ENCODE measurements at regions of chr4 and their contacts with region 1.

Region 1: GRCh38 chr4:162770761-162771490 is 395.8 kb downstream of the NAF1 start:
- DNase-seq: no peak
- ATAC-seq: no peak
- H3K4me3 ChIP-seq: no peak overlapping the region
- H3K27ac ChIP-seq: no peak overlapping the region
- H3K4me1 ChIP-seq: no peaks in the 10 kb centered on the region
- H3K27me3 ChIP-seq: no peaks in the 10 kb centered on the region
- CTCF ChIP-seq: no peak

Region 2: GRCh38 chr4:162610116-162610515 is 160.8 kb before region 1 on chr4:
- CTCF ChIA-PET with region 1: no interaction called
- POLR2A ChIA-PET with region 1: no interaction called
- intact Hi-C with region 1: no loop called
- DNase-seq: no peak
- ATAC-seq: no peak
- H3K4me3 ChIP-seq: no peak overlapping the region
- H3K27ac ChIP-seq: no peak overlapping the region
- H3K4me1 ChIP-seq: no peaks in the 10 kb centered on the region
- H3K27me3 ChIP-seq: no peaks in the 10 kb centered on the region
- CTCF ChIP-seq: no peak

Region 3: DNA sequence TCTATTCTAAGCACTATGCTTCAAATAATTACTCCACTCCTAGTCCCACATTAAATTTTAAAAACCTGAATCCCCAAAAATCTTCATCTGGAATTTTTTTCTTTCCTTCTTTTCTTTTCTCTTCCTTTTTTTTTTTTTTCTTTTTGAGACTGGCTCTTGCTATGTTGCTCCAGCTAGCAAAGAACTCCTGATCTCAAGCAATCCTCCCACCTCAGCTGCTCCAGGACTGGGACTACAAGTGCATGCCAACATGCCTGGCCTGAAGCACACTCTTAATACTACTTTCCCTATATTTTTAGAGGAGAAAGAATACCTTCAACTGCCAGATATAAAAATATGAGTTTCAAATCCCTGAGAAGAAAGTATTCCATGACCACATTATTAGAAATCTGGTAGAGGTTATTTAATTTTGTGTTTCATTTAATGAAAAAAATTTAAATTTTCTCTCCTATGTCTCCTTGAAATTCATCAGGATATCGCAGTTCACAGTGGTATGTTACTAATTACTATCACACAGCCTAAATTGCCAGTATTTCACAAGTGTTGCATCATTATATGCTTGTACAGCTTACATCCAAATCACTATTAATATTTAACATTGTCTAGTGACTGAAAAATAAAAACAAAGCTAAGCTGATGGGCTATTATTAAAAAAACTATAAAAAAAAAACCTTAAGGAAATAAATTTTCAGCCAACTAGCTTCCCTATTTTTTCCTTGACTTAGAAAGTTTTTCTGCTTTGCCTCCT is 168.0 kb after region 1 on chr4:
- CTCF ChIA-PET with region 1: no interaction called
- POLR2A ChIA-PET with region 1: no interaction called
- intact Hi-C with region 1: loop called (anchors 10 kb)
- DNase-seq: no peak
- ATAC-seq: no peak
- H3K4me3 ChIP-seq: no peak overlapping the region
- H3K27ac ChIP-seq: no peak overlapping the region
- H3K4me1 ChIP-seq: no peaks in the 10 kb centered on the region
- H3K27me3 ChIP-seq: no peaks in the 10 kb centered on the region
- CTCF ChIP-seq: no peak

Measured in PC-3 (cell line).